ENCODE measurements at regions of chr21 and their contacts with region 1.

Region 1: GRCh38 chr21:33931799-33932390 is 16.3 kb upstream of the ATP5PO start:
- DNase-seq: peak; percentile 38
- ATAC-seq: peak; percentile 13
- H3K4me3 Mint-ChIP-seq: peak overlapping the region; percentile 92
- H3K27ac Mint-ChIP-seq: peak overlapping the region; percentile 99
- H3K4me1 Mint-ChIP-seq: peaks cover 40% of the 10 kb centered on the region
- H3K27me3 Mint-ChIP-seq: no peaks in the 10 kb centered on the region

Region 2: GRCh38 chr21:34008618-34009017 is 76.7 kb after region 1 on chr21:
- CTCF ChIA-PET with region 1: interaction called, 3 read pairs
- POLR2A ChIA-PET with region 1: interaction called, 4 read pairs
- intact Hi-C with region 1: loop called in 1 of 2 experiments (anchors 2 kb)
- DNase-seq: peak; percentile 89
- ATAC-seq: peak; percentile 96
- H3K4me3 Mint-ChIP-seq: no peak overlapping the region
- H3K27ac Mint-ChIP-seq: peak overlapping the region; percentile 44
- H3K4me1 Mint-ChIP-seq: peaks cover 21% of the 10 kb centered on the region
- H3K27me3 Mint-ChIP-seq: no peaks in the 10 kb centered on the region

Measured in activated CD4-positive, alpha-beta T cell treated with anti-CD3 and anti-CD28 coated beads for 36 hours (primary cell).